ENCODE measurements at regions of chr12 and their contacts with region 1.

Region 1: GRCh38 chr12:132560614-132561426 is 49.6 kb downstream of the LRCOL1 start:
- DNase-seq: peak; percentile 91
- ATAC-seq: peak; percentile 75
- H3K4me3 Mint-ChIP-seq: peak overlapping the region; percentile 79
- H3K27ac Mint-ChIP-seq: no peak overlapping the region
- H3K4me1 Mint-ChIP-seq: peaks cover 2% of the 10 kb centered on the region; the same call in 1 of the 2 replicates
- H3K27me3 Mint-ChIP-seq: peaks cover 35% of the 10 kb centered on the region
- CTCF ChIP-seq: peak; percentile 91

Region 2: GRCh38 chr12:132437252-132437932 is 123.4 kb before region 1 on chr12:
- CTCF ChIA-PET with region 1: no interaction called
- POLR2A ChIA-PET with region 1: no interaction called
- DNase-seq: peak; percentile 71
- ATAC-seq: peak; percentile 70
- H3K4me3 Mint-ChIP-seq: peak overlapping the region; percentile 47
- H3K27ac Mint-ChIP-seq: no peak overlapping the region
- H3K4me1 Mint-ChIP-seq: peaks cover 20% of the 10 kb centered on the region
- H3K27me3 Mint-ChIP-seq: peaks cover 77% of the 10 kb centered on the region
- CTCF ChIP-seq: no peak

Region 3: DNA sequence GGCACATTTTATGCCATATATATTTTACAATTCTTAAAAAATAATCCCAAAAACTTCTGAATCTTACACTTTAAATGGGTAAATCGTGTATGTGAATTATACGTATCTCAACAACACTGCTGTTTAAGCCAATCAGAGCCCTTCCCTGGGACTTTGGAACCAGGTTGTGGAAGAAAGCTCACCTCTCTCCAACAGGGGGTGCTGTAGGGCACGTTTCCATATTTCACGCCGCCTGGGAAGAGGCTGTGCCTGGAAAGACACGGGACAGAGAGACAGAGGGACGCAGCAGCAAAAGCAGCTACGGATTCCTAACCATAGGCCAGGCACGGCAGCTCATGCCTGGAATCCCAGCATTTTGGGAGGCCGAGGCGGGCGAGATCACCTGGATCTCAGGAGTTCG is 100.2 kb before region 1 on chr12:
- CTCF ChIA-PET with region 1: interaction called, 15 read pairs
- POLR2A ChIA-PET with region 1: interaction called, 3 read pairs
- DNase-seq: peak; percentile 58
- ATAC-seq: peak; percentile 71
- H3K4me3 Mint-ChIP-seq: no peak overlapping the region
- H3K27ac Mint-ChIP-seq: no peak overlapping the region
- H3K4me1 Mint-ChIP-seq: no peaks in the 10 kb centered on the region
- H3K27me3 Mint-ChIP-seq: peaks cover 33% of the 10 kb centered on the region
- CTCF ChIP-seq: peak; percentile 37; the same call in 1 of the 2 replicates

Region 4: DNA sequence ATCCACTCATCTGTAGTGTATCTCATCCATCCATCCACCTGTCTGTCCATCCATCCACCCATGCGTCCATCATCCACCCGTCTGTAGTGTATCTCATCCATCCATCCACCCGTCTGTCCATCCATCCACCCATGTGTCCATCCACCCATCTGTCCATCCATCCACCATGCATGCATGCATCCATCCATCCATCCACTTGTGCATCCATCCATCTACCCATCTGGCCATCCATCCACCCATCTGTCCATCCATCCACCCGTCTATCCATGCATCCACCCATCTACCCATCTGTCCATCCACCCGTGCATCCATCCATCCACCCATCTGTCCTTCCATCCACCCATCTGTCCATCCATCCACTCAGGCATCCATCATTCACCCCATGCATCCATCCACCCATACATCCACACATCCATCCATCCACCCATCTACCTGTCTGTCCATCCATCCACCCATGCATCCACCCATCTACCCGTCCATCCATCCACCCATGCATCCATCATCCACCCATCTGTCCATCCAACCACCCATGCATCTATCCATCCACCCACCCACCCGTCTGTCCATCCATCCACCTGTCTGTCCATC is 42.4 kb before region 1 on chr12:
- CTCF ChIA-PET with region 1: interaction called, 11 read pairs
- POLR2A ChIA-PET with region 1: no interaction called
- DNase-seq: no peak
- ATAC-seq: no peak
- H3K4me3 Mint-ChIP-seq: no peak overlapping the region
- H3K27ac Mint-ChIP-seq: no peak overlapping the region
- H3K4me1 Mint-ChIP-seq: no peaks in the 10 kb centered on the region
- H3K27me3 Mint-ChIP-seq: peaks cover 43% of the 10 kb centered on the region
- CTCF ChIP-seq: no peak

Region 5: DNA sequence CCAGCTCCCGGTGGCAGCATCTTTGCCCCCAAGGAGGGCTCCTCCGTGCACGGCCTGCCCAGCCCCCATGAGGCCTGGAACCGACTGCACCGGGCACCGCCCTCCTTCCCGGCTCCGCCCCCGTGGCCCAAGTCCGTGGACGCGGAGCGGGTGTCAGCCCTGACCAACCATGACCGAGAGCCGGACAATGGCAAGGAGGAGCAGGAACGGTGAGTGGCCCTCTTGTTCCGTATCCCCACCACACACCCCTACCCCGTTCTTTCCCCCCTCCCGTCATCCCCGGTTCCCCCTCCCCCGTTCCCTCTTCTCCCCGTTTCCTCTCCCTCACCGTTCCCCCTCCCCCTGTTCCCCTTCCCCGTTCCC is 21.2 kb after region 1 on chr12:
- CTCF ChIA-PET with region 1: interaction called, 15 read pairs
- POLR2A ChIA-PET with region 1: no interaction called
- DNase-seq: peak; percentile 61
- ATAC-seq: peak; percentile 51
- H3K4me3 Mint-ChIP-seq: peak overlapping the region; percentile 60
- H3K27ac Mint-ChIP-seq: no peak overlapping the region
- H3K4me1 Mint-ChIP-seq: peaks cover 5% of the 10 kb centered on the region
- H3K27me3 Mint-ChIP-seq: peaks cover 51% of the 10 kb centered on the region
- CTCF ChIP-seq: no peak

Region 6: DNA sequence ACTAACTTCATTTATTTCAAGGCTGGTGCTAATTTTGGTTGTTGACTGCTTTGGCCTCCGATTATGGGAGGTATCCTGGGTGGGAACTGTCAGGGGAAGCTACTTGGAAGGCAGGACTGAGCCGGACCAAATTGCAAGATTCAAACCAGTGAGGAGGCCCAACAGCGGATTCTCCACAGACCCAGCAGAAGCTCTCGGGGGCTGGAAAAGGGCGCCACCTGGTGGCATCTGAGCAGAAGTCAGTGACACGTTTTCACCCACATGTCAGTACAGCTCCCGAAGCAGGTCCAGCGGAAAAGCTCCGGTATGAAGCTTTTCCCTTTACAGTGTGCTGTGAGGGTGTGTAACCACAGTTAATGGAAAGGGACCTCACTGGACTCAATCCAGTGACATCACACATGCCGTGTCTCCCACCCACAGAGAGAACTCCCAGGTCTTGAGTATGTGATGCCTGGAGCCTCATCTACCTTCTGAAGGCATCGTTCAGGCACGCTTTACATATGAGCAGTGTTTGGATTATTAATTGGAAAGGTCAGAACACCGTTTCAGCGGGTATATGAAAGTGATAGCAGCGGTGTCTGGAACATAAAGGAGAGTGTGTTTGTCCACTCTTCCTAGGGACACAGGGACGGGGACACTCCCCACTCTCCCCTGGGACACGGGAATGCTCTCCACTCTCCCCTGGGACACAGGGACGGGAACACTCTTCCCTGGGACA is 54.2 kb after region 1 on chr12:
- CTCF ChIA-PET with region 1: interaction called, 18 read pairs
- POLR2A ChIA-PET with region 1: no interaction called
- DNase-seq: peak; percentile 88
- ATAC-seq: peak; percentile 63
- H3K4me3 Mint-ChIP-seq: no peak overlapping the region
- H3K27ac Mint-ChIP-seq: no peak overlapping the region
- H3K4me1 Mint-ChIP-seq: peaks cover 5% of the 10 kb centered on the region
- H3K27me3 Mint-ChIP-seq: peaks cover 83% of the 10 kb centered on the region
- CTCF ChIP-seq: peak; percentile 91

Region 7: GRCh38 chr12:132695431-132695830 is 134.6 kb after region 1 on chr12:
- CTCF ChIA-PET with region 1: no interaction called
- POLR2A ChIA-PET with region 1: no interaction called
- DNase-seq: no peak
- ATAC-seq: no peak
- H3K4me3 Mint-ChIP-seq: no peak overlapping the region
- H3K27ac Mint-ChIP-seq: no peak overlapping the region
- H3K4me1 Mint-ChIP-seq: no peaks in the 10 kb centered on the region
- H3K27me3 Mint-ChIP-seq: no peaks in the 10 kb centered on the region
- CTCF ChIP-seq: no peak

Measured in WTC11 (cell line).